CD14-positive monocyte (primary cell): ENCODE measurements at regions of chr1 and their contacts with region 1.

Region 1: DNA sequence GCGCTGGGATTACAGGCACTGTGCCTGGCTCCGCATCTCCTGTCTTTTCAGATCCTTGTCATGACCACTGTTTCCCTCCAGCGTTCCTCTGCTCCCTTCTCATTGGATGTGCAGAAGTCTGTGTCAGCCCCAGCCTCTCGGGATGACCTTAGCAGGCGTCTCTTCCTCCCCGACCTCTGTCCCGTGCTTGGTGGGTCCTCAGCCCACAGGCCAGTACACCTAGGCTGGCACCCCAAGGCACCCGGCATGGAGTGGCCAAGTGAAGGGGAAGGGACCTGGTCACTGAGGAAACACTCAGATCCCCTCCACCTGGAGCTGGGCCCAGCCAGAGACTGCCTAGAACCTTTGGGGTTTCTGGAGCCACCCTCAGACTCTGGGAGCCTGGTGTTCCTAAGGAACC is 2.4 kb upstream of the CLCNKB start:
- DNase-seq: no peak
- H3K4me3 ChIP-seq: no peak overlapping the region
- H3K4me3 Mint-ChIP-seq: no peak overlapping the region
- H3K27ac ChIP-seq: no peak overlapping the region
- H3K27ac Mint-ChIP-seq: no peak overlapping the region
- H3K4me1 ChIP-seq: no peaks in the 10 kb centered on the region
- H3K4me1 Mint-ChIP-seq: no peaks in the 10 kb centered on the region
- H3K27me3 ChIP-seq: no peaks in the 10 kb centered on the region
- H3K27me3 Mint-ChIP-seq: peaks cover 4 to 13% (median 10%) of the 10 kb centered on the region in 3 donors
- CTCF ChIP-seq: no peak

Region 2: GRCh38 chr1:15937706-15938168 is 103.5 kb before region 1 on chr1:
- intact Hi-C with region 1: no loop called
- DNase-seq: peak; percentile 36 to 63 (median 45)
- H3K4me3 ChIP-seq: no peak overlapping the region
- H3K4me3 Mint-ChIP-seq: no peak overlapping the region
- H3K27ac ChIP-seq: peak overlapping the region; percentile 9 to 68
- H3K27ac Mint-ChIP-seq: peak overlapping the region; percentile 69 to 94 (median 87)
- H3K4me1 ChIP-seq: no peaks in the 10 kb centered on the region
- H3K4me1 Mint-ChIP-seq: peaks cover 4% of the 10 kb centered on the region
- H3K27me3 ChIP-seq: no peaks in the 10 kb centered on the region
- H3K27me3 Mint-ChIP-seq: peaks cover 0 to 4% (median 1%) of the 10 kb centered on the region in 3 donors
- CTCF ChIP-seq: peak; percentile 22

Region 3: GRCh38 chr1:16063226-16063829 is 22.1 kb after region 1 on chr1:
- intact Hi-C with region 1: loop called in 1 of 2 experiments (anchors 2 kb)
- DNase-seq: no peak
- H3K4me3 ChIP-seq: no peak overlapping the region
- H3K4me3 Mint-ChIP-seq: no peak overlapping the region
- H3K27ac ChIP-seq: no peak overlapping the region
- H3K27ac Mint-ChIP-seq: no peak overlapping the region
- H3K4me1 ChIP-seq: no peaks in the 10 kb centered on the region
- H3K4me1 Mint-ChIP-seq: no peaks in the 10 kb centered on the region
- H3K27me3 ChIP-seq: no peaks in the 10 kb centered on the region
- H3K27me3 Mint-ChIP-seq: peaks cover 10 to 29% (median 24%) of the 10 kb centered on the region in 3 donors
- CTCF ChIP-seq: no peak